Calu3 (cell line): ENCODE measurements at regions of chr1 and their contacts with region 1.

Region 1: GRCh38 chr1:199463521-199464128 is 563.9 kb upstream of the NR5A2 start:
- DNase-seq: peak; percentile 77
- H3K4me3 Mint-ChIP-seq: no peak overlapping the region
- H3K27ac Mint-ChIP-seq: no peak overlapping the region
- H3K4me1 Mint-ChIP-seq: peaks cover 9% of the 10 kb centered on the region
- H3K27me3 Mint-ChIP-seq: no peaks in the 10 kb centered on the region
- CTCF ChIP-seq: peak; percentile 87

Region 2: DNA sequence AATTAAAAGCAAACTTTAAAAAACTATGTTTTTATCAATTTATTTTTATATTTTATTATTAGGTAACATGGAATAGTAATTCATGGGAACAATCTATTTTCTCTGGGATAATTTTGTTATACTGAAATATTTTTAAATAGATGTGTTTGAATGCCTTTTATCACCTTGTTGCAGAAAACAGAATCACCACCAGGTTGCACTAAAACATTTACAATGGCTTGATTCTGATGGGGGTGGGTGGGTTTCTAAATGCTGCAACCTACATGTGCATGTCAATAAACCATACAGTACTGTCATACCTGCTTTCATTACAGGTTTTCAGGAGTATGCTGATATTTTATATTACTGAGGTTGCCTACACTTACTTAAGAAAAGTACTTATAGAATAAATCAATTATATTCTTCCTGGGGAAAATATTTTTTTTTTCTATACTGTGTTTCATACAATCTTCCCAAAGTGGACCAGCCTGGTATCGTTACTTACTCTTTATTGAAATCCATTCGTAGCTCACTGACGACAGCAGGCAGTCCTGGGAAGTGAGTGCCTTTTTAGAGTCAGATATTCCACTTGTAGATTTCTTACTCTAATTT is 692.0 kb before region 1 on chr1:
- CTCF ChIA-PET with region 1: interaction called, 3 read pairs
- intact Hi-C with region 1: loop called (anchors 1 kb)
- DNase-seq: peak; percentile 42
- H3K4me3 Mint-ChIP-seq: no peak overlapping the region
- H3K27ac Mint-ChIP-seq: no peak overlapping the region
- H3K4me1 Mint-ChIP-seq: no peaks in the 10 kb centered on the region
- H3K27me3 Mint-ChIP-seq: no peaks in the 10 kb centered on the region
- CTCF ChIP-seq: peak; percentile 73

Region 3: GRCh38 chr1:199113265-199113869 is 350.3 kb before region 1 on chr1:
- CTCF ChIA-PET with region 1: interaction called, 8 read pairs
- intact Hi-C with region 1: loop called (anchors 1 kb)
- DNase-seq: peak; percentile 69
- H3K4me3 Mint-ChIP-seq: no peak overlapping the region
- H3K27ac Mint-ChIP-seq: no peak overlapping the region
- H3K4me1 Mint-ChIP-seq: no peaks in the 10 kb centered on the region
- H3K27me3 Mint-ChIP-seq: no peaks in the 10 kb centered on the region
- CTCF ChIP-seq: peak; percentile 77

Region 4: DNA sequence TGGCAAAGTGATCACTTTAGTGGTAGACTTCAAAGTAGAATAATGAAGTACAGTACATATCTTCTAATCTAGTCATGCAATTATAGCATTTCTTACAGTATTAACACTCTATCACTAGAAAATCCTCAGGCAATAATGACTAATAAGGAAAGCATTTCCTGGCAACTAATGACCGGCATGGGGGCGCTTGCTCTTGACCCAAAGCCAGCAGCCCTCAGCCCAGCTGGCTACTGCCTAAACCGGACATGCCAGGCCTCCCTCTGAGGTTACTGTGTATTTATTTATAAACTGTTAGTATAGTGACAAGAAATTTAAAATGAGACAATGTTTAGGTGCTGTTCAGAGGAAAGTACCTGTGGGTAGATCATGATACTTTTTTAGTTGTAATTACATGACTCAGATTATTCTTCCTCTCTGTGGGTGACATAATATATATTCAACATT is 191.0 kb before region 1 on chr1:
- CTCF ChIA-PET with region 1: interaction called, 5 read pairs
- intact Hi-C with region 1: loop called (anchors 2 kb)
- DNase-seq: peak; percentile 86
- H3K4me3 Mint-ChIP-seq: no peak overlapping the region
- H3K27ac Mint-ChIP-seq: peak overlapping the region; percentile 62
- H3K4me1 Mint-ChIP-seq: peaks cover 40% of the 10 kb centered on the region
- H3K27me3 Mint-ChIP-seq: no peaks in the 10 kb centered on the region
- CTCF ChIP-seq: no peak

Region 5: GRCh38 chr1:199551967-199552565 is 88.4 kb after region 1 on chr1:
- CTCF ChIA-PET with region 1: no interaction called
- intact Hi-C with region 1: loop called (anchors 5 kb)
- DNase-seq: peak; percentile 72
- H3K4me3 Mint-ChIP-seq: no peak overlapping the region
- H3K27ac Mint-ChIP-seq: no peak overlapping the region
- H3K4me1 Mint-ChIP-seq: no peaks in the 10 kb centered on the region
- H3K27me3 Mint-ChIP-seq: no peaks in the 10 kb centered on the region
- CTCF ChIP-seq: peak; percentile 68